Stomach (tissue), 19 donors: ENCODE measurements at regions of chr1 and their contacts with region 1.

Region 1: DNA sequence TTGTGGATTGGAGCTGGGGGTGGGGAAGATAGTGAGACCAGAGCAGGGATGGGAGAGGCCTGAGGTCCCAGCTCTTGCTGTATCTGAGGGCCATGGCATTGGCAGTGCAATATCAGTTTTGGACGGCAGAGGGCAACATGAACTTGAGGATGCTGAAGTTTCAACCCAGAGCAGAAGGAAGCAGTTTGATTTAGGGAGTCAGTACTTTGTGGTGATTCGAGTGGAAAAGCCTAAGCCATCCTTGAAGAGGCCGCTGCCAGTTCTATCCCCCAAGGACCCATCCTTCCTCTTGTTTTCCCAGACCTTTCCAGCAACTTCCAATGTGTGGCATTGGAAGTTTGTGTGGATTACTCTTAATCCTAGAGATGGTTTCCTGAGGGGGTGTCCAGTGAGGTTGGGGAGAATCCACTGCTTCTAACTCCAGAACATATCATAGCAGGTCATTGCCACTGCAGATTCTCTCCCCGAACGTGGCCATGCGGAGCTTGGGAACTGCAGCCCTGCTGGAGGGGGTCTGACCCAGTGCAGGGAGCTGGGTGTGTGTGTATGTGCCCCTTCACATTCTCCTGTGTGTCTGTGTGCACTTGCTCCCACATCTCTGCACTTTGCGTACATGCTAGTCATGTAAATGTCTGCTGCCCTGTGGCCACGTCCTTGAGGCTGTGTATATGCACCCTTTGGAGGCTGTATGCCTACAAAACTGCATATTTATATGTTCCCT is 24.1 kb downstream of the SLC26A9 start:
- DNase-seq: peak; percentile 85 to 92
- H3K4me3 ChIP-seq: no peak overlapping the region
- H3K27ac ChIP-seq: peak overlapping the region in 1 of 5 donors; percentile 38
- H3K4me1 ChIP-seq: peaks cover 4 to 10% (median 7%) of the 10 kb centered on the region in 4 donors
- H3K27me3 ChIP-seq: peaks cover 0 to 8% (median 0%) of the 10 kb centered on the region in 3 donors
- CTCF ChIP-seq: peak in 6 of 7 experiments; percentile 77 to 97 (median 96)
- EP300 ChIP-seq: no peak
- POLR2A ChIP-seq: no peak

Region 2: GRCh38 chr1:205791568-205792180 is 127.5 kb before region 1 on chr1:
- intact Hi-C with region 1: loop called (anchors 10 kb)
- DNase-seq: peak; percentile 72 to 84
- H3K4me3 ChIP-seq: no peak overlapping the region
- H3K27ac ChIP-seq: no peak overlapping the region
- H3K4me1 ChIP-seq: no peaks in the 10 kb centered on the region
- H3K27me3 ChIP-seq: no peaks in the 10 kb centered on the region
- CTCF ChIP-seq: peak in 5 of 7 experiments; percentile 67 to 81 (median 73)
- EP300 ChIP-seq: no peak
- POLR2A ChIP-seq: no peak

Region 3: GRCh38 chr1:205977402-205978014 is 58.3 kb after region 1 on chr1:
- intact Hi-C with region 1: loop called (anchors 5 kb)
- DNase-seq: peak; percentile 71 to 93
- H3K4me3 ChIP-seq: no peak overlapping the region
- H3K27ac ChIP-seq: no peak overlapping the region
- H3K4me1 ChIP-seq: peaks cover 0 to 23% (median 12%) of the 10 kb centered on the region in 4 donors
- H3K27me3 ChIP-seq: no peaks in the 10 kb centered on the region
- CTCF ChIP-seq: peak in 6 of 7 experiments; percentile 11 to 96 (median 92)
- EP300 ChIP-seq: no peak
- POLR2A ChIP-seq: no peak

Region 4: DNA sequence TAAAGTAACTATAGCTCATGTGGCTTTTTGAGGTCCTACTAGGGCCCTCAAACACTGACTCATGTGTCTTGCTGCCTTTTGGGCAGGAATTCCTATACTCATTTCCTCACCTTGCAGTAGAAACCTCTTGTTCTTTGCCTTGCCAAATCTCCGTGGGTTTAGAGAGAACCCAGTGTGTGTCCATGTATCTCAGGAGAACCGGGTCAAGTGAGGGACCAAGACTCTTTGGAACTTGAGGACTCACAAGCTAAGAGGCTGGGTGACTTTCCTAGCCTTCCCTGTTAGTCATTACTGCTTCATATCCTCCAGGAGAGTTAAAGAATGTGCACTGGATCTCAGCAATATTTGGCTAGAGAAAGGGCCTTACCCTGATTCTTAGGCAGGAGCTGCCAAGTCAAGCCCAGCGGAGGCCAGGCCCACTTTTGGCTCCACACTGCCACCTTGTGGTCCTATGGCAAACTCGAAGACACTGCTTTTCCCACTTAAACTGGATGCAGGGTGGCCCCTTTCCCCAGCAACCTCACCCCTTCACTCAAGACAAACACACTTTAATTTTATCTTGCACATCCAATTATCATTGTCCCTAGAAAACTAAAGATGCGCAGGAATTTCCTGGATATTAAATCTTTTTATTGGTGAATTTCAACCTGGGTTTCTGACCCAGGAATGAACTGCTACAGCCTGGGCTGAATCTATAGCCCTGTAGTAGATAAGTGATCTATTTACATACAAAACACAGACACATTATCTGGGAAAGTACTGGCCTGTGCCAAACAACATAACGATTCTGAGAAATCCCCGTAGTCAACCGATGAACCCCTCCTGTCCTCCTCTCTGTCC is 187.4 kb after region 1 on chr1:
- intact Hi-C with region 1: loop called (anchors 10 kb)
- DNase-seq: peak; percentile 87 to 94
- H3K4me3 ChIP-seq: no peak overlapping the region
- H3K27ac ChIP-seq: no peak overlapping the region
- H3K4me1 ChIP-seq: peaks cover 0 to 9% (median 2%) of the 10 kb centered on the region in 4 donors
- H3K27me3 ChIP-seq: no peaks in the 10 kb centered on the region
- CTCF ChIP-seq: peak in 5 of 7 experiments; percentile 61 to 91 (median 75)
- EP300 ChIP-seq: no peak
- POLR2A ChIP-seq: no peak

Region 5: DNA sequence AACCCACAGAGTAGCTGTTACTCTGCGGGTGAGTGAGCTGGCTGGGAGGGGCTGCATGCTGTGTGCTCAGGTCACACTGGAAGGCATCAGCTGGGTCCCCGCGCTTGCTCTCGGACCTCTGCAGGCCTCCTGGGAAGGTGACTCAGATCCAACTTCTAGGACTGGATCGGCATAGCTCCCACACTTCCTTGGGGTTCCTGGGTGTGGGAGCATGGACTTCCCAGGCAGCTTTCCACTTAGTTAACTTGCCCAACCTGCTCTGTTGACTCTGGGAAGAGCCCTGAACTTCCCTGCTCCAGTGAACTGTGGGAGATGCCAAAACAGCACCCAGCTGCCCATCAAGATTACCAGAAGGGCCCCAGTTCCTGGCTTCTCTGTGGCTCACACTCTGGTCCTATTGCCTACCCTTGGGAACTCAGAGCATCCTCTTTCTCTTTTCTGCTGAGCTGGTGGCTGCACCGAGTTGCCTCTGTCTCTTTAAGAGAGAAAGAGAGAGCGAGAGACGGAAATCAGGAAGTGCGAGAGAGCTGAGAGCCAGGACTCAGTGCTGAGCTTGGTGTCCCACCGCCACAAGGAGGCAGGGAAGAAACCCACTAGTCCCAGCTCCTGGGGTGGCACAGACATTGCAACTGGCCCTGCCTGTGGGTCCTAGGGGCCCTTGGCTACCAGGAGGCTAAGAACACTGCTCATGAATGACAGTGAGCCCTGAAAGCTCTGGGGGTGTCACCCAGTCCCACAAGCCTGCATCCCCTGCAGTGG is 550.9 kb after region 1 on chr1 and contains the start of gene IKBKE:
- intact Hi-C with region 1: no loop called
- DNase-seq: peak; percentile 67 to 83
- H3K4me3 ChIP-seq: peak within 1 kb of the TSS; percentile 57 to 82 (median 78)
- H3K27ac ChIP-seq: peak within 1 kb of the TSS; percentile 45 to 89 (median 75)
- H3K4me1 ChIP-seq: peaks cover 32 to 48% (median 42%) of the 10 kb centered on the region in 4 donors
- H3K27me3 ChIP-seq: peaks cover 0 to 20% (median 0%) of the 10 kb centered on the region in 3 donors
- CTCF ChIP-seq: peak in 2 of 7 experiments; percentile 19 to 30
- EP300 ChIP-seq: no peak
- POLR2A ChIP-seq: no peak
- total RNA-seq, gene IKBKE: 4.9 to 49.6 (median 15.9) TPM